HCT116 (cell line): ENCODE measurements at regions of chr11 and their contacts with region 1.

Region 1: DNA sequence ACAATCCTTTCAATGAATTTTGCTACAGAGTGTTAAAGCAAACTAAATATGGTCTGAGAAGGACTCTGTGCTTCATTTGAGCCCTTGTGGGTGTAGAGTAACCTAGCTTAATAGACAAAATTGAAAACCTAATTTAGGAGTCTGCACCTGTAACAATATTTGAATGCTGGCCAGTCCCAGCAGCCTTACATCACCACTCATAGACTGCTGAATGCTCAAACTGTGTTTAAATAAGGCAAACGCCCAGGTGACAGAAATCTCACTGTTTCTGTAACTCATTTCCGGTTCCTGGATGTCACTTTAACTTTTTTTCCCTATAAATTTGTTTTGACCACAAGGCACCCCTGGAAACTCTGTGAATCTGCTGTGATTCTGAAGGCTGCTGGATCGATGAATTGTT is 45.5 kb upstream of the GLYATL1B start:
- DNase-seq: no peak
- ATAC-seq: no peak
- H3K4me3 ChIP-seq: no peak overlapping the region
- H3K27ac ChIP-seq: no peak overlapping the region
- H3K4me1 ChIP-seq: no peaks in the 10 kb centered on the region
- H3K27me3 ChIP-seq: peaks cover 4% of the 10 kb centered on the region
- CTCF ChIP-seq: no peak
- POLR2A ChIP-seq: no peak
- RAD21 ChIP-seq: no peak

Region 2: DNA sequence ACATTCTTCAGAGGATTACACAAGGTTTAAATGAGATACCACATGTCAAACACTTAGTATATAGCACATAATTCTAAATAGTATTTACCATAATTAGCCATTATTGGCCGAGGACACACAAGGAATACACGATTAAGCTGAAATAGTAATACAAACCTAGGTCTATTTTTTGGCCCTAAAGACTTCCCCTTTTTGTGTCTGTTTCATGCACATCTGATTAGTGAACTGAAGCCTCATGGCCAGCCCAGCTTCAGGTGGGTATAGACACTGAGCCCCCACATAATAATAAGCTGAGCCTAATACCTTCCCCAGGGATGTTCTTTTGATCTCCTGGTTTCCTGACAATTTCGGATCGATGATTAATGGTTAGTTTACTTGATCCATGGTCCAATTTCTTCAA is 47.6 kb after region 1 on chr11:
- CTCF ChIA-PET with region 1: no interaction called
- POLR2A ChIA-PET with region 1: no interaction called
- RAD21 ChIA-PET with region 1: no interaction called
- intact Hi-C with region 1: loop called (anchors 1 kb)
- DNase-seq: no peak
- ATAC-seq: no peak
- H3K4me3 ChIP-seq: no peak overlapping the region
- H3K27ac ChIP-seq: no peak overlapping the region
- H3K4me1 ChIP-seq: no peaks in the 10 kb centered on the region
- H3K27me3 ChIP-seq: peaks cover 23% of the 10 kb centered on the region
- CTCF ChIP-seq: no peak
- POLR2A ChIP-seq: no peak
- RAD21 ChIP-seq: no peak